PC-3 (cell line): ENCODE measurements at regions of chr9 and their contacts with region 1.

Region 1: GRCh38 chr9:91395553-91396471 is 27.8 kb downstream of the NFIL3 start:
- DNase-seq: peak; percentile 77
- ATAC-seq: peak; percentile 85
- H3K4me3 ChIP-seq: no peak overlapping the region
- H3K27ac ChIP-seq: peak overlapping the region; percentile 40
- H3K4me1 ChIP-seq: peaks cover 34% of the 10 kb centered on the region
- H3K27me3 ChIP-seq: no peaks in the 10 kb centered on the region
- CTCF ChIP-seq: no peak

Region 2: GRCh38 chr9:91407580-91408318 is 11.9 kb after region 1 on chr9:
- CTCF ChIA-PET with region 1: no interaction called
- POLR2A ChIA-PET with region 1: no interaction called
- intact Hi-C with region 1: loop called (anchors 2 kb)
- DNase-seq: peak; percentile 71
- ATAC-seq: peak; percentile 92
- H3K4me3 ChIP-seq: no peak overlapping the region
- H3K27ac ChIP-seq: no peak overlapping the region
- H3K4me1 ChIP-seq: peaks cover 24% of the 10 kb centered on the region
- H3K27me3 ChIP-seq: no peaks in the 10 kb centered on the region
- CTCF ChIP-seq: no peak

Region 3: GRCh38 chr9:91451519-91452270 is 55.9 kb after region 1 on chr9:
- CTCF ChIA-PET with region 1: no interaction called
- POLR2A ChIA-PET with region 1: no interaction called
- intact Hi-C with region 1: no loop called
- DNase-seq: no peak
- ATAC-seq: no peak
- H3K4me3 ChIP-seq: no peak overlapping the region
- H3K27ac ChIP-seq: no peak overlapping the region
- H3K4me1 ChIP-seq: no peaks in the 10 kb centered on the region
- H3K27me3 ChIP-seq: no peaks in the 10 kb centered on the region
- CTCF ChIP-seq: no peak